AG04450 (cell line): ENCODE measurements at regions of chr11 and their contacts with region 1.

Region 1: DNA sequence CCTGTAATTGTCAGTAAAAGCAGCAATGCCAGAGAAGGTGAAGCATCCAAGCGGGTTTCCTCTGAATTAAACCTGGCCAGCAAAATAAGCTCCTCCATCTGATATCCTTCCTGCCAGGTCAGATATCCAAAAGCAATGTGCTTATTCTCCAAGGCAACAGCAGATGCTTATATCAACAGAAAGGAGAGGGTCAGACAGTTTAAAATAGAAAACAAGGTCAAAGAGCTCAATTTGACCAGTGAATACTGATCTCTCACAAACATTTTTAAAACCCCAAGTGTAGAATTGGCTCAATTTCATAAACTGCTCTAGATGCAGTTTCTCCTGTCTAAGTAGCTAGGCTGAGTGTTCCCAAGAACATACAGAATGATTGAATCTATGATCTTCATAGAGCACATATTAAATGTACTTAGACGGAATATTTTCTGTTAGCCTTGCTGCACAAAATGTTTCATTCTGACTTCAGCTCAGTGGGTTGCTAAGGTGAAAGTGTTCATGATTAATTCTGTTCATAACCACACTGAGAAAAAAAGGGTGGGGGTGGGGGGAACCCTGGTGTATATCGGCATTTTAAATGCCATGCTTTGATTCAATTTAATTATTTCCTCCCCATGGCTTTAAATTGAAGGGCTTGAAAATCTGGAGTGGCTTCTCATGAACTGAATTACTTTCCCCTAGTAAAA is 174.2 kb upstream of the ARHGAP20 start:
- DNase-seq: no peak
- H3K4me3 ChIP-seq: no peak overlapping the region
- H3K27ac ChIP-seq: no peak overlapping the region
- H3K27me3 ChIP-seq: no peaks in the 10 kb centered on the region
- CTCF ChIP-seq: no peak

Region 2: GRCh38 chr11:110471371-110471770 is 415.1 kb before region 1 on chr11:
- CTCF ChIA-PET with region 1: no interaction called
- POLR2A ChIA-PET with region 1: interaction called, 11 read pairs
- DNase-seq: peak; percentile 24
- H3K4me3 ChIP-seq: no peak overlapping the region
- H3K27ac ChIP-seq: peak overlapping the region; percentile 74
- H3K27me3 ChIP-seq: no peaks in the 10 kb centered on the region
- CTCF ChIP-seq: no peak